ENCODE measurements at regions of chr7 and their contacts with region 1.

Region 1: DNA sequence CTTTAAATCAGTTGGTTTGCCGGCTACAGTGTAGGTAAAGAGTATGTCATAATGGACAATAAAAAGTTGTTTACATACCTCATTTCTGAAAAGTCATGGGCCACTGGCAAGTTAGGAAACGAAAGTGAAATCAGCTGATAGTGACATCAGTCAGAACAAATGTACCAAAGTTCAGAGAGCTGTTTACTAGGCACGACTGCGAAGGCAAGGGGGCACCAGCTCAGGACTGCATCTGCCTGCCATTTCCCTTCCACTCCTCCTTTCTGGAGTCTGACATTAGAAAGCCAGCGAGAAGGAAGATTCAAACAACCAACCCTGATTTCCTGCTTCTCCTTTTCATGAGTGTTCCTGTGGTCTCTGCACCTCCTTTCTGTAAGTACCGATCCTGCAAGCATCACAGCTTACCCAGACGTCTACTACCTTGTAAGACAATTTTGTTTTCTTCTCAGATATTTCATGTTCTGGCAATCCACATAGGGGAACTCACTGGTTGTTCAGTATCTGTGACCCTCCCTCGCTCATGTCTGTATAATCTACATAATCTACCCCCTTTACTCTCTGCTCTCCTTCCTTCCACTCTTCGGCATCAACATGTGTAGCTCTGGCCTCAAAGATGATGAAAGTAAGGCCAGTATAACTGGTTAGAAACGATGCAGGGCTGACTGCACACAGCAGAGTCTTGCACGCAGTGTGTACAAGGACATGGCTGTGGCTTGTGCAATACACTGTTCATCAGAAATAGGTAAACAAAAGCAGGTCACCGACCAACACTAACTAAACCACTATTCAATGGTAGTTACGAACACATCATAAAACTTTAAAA is at the start of gene TMEM140:
- DNase-seq: peak; percentile 64
- ATAC-seq: peak; percentile 82
- H3K4me3 ChIP-seq: peak within 1 kb of the TSS; percentile 38
- H3K27ac ChIP-seq: peak within 1 kb of the TSS; percentile 88
- H3K4me1 ChIP-seq: peaks cover 4% of the 10 kb centered on the region; the same call in 1 of the 2 replicates
- H3K27me3 ChIP-seq: no peaks in the 10 kb centered on the region
- CTCF ChIP-seq: no peak
- POLR2A ChIP-seq: no peak
- RAD21 ChIP-seq: no peak
- total RNA-seq, gene TMEM140: 0.28 and 0.72 TPM in 2 replicates

Region 2: GRCh38 chr7:134811765-134812164 is 336.3 kb before region 1 on chr7:
- CTCF ChIA-PET with region 1: no interaction called
- POLR2A ChIA-PET with region 1: no interaction called
- dilution Hi-C with region 1: no loop called
- in situ Hi-C with region 1: no loop called
- intact Hi-C with region 1: no loop called
- DNase-seq: peak; percentile 60
- ATAC-seq: no peak
- H3K4me3 ChIP-seq: no peak overlapping the region
- H3K27ac ChIP-seq: peak overlapping the region; percentile 37; the same call in 1 of the 2 replicates
- H3K4me1 ChIP-seq: peaks cover 27% of the 10 kb centered on the region
- H3K27me3 ChIP-seq: no peaks in the 10 kb centered on the region
- CTCF ChIP-seq: no peak
- POLR2A ChIP-seq: no peak
- RAD21 ChIP-seq: no peak

Region 3: DNA sequence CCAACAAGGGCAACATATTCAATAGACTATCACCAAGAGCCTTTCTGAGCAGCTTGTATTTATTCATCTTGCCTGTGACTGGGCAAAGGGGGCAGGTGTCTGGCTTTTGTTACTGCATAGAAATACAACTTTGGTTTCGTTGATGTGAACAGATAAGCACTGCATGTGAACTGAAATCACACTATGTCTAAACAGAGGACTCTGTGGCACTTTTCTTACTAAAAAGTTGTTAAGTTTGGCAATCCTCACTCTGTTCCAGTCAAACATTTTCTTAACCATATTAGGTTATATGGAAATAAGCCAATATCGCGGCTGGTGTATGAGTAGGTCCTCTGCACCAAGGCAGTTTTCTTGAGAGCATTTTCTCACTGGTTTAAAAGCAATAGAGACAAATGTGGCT is 320.2 kb before region 1 on chr7:
- CTCF ChIA-PET with region 1: no interaction called
- POLR2A ChIA-PET with region 1: no interaction called
- dilution Hi-C with region 1: no loop called
- in situ Hi-C with region 1: no loop called
- intact Hi-C with region 1: no loop called
- DNase-seq: peak; percentile 84
- ATAC-seq: peak; percentile 60
- H3K4me3 ChIP-seq: no peak overlapping the region
- H3K27ac ChIP-seq: peak overlapping the region; percentile 39; the same call in 1 of the 2 replicates
- H3K4me1 ChIP-seq: peaks cover 30% of the 10 kb centered on the region
- H3K27me3 ChIP-seq: no peaks in the 10 kb centered on the region
- CTCF ChIP-seq: no peak
- POLR2A ChIP-seq: no peak; the same call in 1 of the 2 replicates
- RAD21 ChIP-seq: no peak

Region 4: DNA sequence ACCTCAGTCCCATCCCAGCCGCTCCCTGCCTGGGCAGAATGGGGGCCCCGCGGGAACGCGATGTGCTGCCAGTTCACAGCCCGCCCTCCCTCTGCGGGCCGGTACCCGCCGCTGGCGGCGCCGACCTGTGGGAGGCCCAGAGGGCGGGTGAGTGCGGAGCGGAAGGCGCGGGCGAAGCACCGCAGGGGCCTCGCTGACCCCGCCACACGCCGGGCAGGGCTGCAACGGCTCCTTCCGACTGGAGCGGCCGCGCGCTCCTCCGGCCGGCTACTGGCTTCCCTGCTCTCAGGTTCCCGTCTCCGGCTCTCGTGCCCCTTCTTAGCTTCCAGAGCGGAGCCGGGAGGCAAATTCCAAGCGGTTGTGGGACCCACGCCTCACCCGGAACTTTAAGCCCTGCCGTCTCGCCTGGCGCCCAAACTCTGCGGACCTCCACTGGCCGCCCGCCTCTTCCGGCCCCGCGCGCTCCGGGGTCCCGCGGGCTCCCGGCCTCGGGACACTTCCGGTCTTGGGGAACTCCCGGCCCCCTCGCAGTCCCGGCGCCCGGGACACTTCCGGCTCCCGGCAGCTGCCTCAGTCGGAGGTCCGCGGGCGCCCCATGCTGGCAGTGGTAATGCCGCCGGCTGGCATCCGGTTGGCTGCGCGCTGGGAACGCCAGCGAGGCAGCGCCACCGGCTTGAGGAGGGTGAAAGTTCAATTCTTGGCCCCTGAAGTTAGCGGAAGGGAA is 22.3 kb after region 1 on chr7 and contains the start of gene CYREN:
- CTCF ChIA-PET with region 1: no interaction called
- POLR2A ChIA-PET with region 1: no interaction called
- dilution Hi-C with region 1: no loop called
- in situ Hi-C with region 1: no loop called
- intact Hi-C with region 1: no loop called
- DNase-seq: peak; percentile 93
- ATAC-seq: peak; percentile 94
- H3K4me3 ChIP-seq: peak within 1 kb of the TSS; percentile 91
- H3K27ac ChIP-seq: peak within 1 kb of the TSS; percentile 96
- H3K4me1 ChIP-seq: peaks cover 12% of the 10 kb centered on the region
- H3K27me3 ChIP-seq: no peaks in the 10 kb centered on the region
- CTCF ChIP-seq: peak; percentile 83
- POLR2A ChIP-seq: peak; percentile 75
- RAD21 ChIP-seq: peak; percentile 75
- total RNA-seq, gene CYREN: 26.5 and 33.1 TPM in 2 replicates

Region 5: DNA sequence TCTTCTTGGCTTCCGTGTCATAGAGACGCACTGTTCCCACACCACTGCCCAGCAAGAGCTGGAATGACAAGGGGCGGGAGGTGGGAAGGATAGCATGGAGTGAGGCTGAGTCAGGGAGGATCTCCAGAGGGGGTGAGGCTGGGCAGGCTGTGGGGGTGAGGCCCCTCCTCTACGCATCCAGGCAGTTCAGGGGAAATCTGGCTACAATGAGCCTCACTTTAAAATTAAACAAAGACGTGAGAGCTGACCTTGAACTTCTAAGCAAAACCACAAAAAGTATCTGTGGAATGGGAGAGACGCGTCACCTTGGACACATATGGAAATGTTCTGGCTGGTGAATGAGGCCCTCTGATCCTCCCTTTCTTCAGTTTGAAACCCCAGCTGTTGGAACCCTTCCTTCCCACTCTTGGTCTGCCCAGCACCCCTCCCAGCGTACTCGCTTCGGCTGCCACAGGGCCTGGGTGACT is 45.5 kb after region 1 on chr7:
- CTCF ChIA-PET with region 1: no interaction called
- POLR2A ChIA-PET with region 1: no interaction called
- dilution Hi-C with region 1: no loop called
- in situ Hi-C with region 1: no loop called
- intact Hi-C with region 1: loop called (anchors 1 kb)
- DNase-seq: peak; percentile 97
- ATAC-seq: peak; percentile 98
- H3K4me3 ChIP-seq: no peak overlapping the region
- H3K27ac ChIP-seq: peak overlapping the region; percentile 40; the same call in 1 of the 2 replicates
- H3K4me1 ChIP-seq: peaks cover 13% of the 10 kb centered on the region
- H3K27me3 ChIP-seq: no peaks in the 10 kb centered on the region
- CTCF ChIP-seq: no peak
- POLR2A ChIP-seq: no peak; the same call in 1 of the 2 replicates
- RAD21 ChIP-seq: no peak

Region 6: DNA sequence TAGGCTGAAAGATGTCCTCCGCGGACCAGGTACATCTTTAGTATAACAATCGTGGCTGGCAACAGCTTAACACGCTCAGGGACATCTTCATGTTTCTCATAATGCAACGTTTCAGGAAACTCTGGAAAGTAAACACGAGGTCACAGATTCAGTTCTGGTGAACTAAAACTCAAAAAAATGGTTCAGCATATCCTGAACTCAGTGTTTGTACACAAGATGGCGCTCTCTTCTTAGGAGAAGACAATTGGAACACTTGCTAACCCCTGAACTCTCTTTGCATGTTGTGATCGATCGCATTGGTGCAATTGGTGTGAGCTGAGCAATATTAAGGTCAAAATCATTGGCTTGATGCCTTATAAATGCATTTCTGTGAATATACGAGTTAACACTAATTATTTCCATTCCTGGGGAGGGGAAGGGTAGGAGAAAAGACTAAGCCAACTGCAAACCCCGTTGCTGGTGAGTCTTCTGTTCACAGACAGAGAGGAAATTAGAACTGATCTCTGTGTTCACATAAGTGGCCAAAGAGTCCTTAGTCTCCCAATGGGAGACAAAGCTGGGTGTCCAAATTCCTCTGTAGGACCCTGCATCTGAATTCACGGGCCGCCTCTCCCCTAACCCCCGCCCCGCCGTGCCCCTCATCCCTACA is 653.1 kb after region 1 on chr7:
- CTCF ChIA-PET with region 1: no interaction called
- POLR2A ChIA-PET with region 1: no interaction called
- dilution Hi-C with region 1: no loop called
- in situ Hi-C with region 1: no loop called
- intact Hi-C with region 1: no loop called
- DNase-seq: peak; percentile 74
- ATAC-seq: peak; percentile 81
- H3K4me3 ChIP-seq: no peak overlapping the region
- H3K27ac ChIP-seq: no peak overlapping the region
- H3K4me1 ChIP-seq: peaks cover 2% of the 10 kb centered on the region; the same call in 1 of the 2 replicates
- H3K27me3 ChIP-seq: no peaks in the 10 kb centered on the region
- CTCF ChIP-seq: peak; percentile 90
- POLR2A ChIP-seq: no peak
- RAD21 ChIP-seq: peak; percentile 97